ENCODE measurements at regions of chr22 and their contacts with region 1.

Region 1: DNA sequence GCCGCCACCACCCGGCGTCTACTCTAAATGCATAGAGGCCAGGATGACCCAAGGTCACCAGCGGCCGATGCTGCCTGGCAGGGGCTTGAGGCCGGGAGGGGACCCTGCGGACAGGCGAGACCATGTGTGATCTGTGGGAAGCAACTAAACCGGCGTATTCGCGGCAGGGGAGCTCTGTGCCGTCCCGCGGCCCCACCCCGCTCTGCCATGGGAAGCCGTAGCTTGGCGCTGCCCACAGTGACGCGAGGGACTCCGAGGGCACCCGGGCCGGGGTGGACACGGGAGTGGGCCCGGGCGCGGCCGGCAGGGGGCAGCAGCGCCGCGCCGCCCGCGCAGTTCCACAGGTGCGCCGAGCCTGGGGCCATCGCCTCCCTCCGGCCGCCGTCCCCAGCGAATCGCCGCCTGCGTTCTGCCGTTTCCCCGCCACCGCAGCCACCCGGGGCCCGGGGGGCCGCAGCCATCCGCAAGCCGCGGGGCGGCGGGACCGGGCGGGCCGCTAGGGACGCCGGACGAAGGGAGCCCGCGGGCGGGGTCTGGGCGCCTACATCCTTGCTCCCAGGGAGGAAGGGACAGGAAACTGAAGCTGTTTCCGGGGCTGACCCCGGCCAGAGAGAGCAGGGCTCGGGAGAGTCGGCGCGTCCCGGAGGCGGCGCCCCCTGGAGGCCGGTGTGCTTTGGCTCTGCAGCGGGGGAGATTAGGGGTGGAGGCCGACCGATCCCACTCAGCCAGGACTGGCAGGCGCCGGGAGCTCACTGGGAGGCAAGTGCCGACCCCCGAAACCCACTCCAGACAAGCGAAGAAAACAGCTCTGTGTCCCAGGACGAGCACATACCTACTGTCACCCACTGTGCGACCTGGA is 12.5 kb upstream of the HDHD5 start:
- DNase-seq: peak; percentile 52 to 81 (median 72)
- ATAC-seq: peak; percentile 92 to 94
- H3K4me3 Mint-ChIP-seq: peak overlapping the region; percentile 79 to 93 (median 86)
- H3K27ac Mint-ChIP-seq: peak overlapping the region in 9 of 10 donors; percentile 35 to 89 (median 76)
- H3K4me1 Mint-ChIP-seq: peaks cover 2 to 9% (median 7%) of the 10 kb centered on the region in 4 donors
- H3K27me3 Mint-ChIP-seq: no peaks in the 10 kb centered on the region

Region 2: GRCh38 chr22:17074648-17075002 is 96.9 kb before region 1 on chr22:
- POLR2A ChIA-PET with region 1: interaction called, 18 read pairs
- DNase-seq: no peak
- ATAC-seq: no peak
- H3K4me3 Mint-ChIP-seq: no peak overlapping the region
- H3K27ac Mint-ChIP-seq: no peak overlapping the region
- H3K4me1 Mint-ChIP-seq: peaks cover 4 to 17% (median 12%) of the 10 kb centered on the region in 4 donors
- H3K27me3 Mint-ChIP-seq: no peaks in the 10 kb centered on the region

Region 3: DNA sequence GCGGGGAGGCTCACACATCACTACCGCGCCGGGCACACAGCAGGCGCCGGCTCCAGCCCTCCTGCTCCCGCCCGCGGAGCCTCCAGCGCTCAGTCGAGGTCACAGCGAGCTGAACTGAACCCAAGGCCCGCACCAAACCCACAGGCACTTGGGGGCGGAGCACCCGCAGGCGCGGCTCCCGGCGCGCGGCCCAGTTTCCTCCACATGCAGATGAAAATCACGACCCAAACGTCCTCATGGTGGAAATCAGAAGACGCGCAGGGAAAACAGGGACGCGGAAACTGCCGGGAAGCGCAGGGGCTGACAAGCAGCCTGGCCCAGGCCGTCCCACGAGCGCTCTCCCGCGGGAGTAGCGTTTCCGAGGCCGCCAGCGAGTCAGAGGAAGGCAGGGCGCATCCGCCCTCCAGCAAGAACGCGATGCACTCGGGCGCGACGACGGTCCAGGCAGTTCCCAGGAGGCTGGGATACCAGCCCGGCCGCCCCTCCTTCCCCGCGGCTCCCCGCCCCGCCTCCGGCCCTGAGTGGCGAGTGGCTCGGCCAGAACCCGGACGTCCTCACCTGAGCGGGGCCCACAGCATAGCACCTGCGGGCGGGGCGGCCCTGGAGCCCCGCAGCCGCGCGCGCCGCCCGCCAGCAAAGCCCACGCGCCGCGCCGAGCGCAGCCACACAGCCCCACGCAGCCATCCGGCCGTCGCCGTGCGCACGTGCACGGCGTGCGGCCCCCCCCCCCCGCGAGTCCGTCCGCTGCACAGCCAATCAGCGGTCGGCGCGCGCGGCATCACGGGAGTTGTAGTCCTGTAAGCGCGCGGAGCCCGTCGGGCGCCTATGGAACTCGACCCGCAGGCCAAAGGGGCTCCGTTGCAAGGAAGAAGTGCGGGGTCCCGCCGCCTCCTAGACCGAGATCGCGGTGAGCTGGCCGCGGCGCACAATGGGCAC is 12.7 kb before region 1 on chr22 and contains the start of gene HDHD5:
- POLR2A ChIA-PET with region 1: interaction called, 12 read pairs
- DNase-seq: peak; percentile 80 to 94 (median 86)
- ATAC-seq: peak; percentile 90 to 92
- H3K4me3 Mint-ChIP-seq: peak within 1 kb of the TSS; percentile 79 to 90 (median 86)
- H3K27ac Mint-ChIP-seq: peak within 1 kb of the TSS; percentile 38 to 91 (median 78)
- H3K4me1 Mint-ChIP-seq: peaks cover 9 to 42% (median 36%) of the 10 kb centered on the region in 4 donors
- H3K27me3 Mint-ChIP-seq: no peaks in the 10 kb centered on the region
- polyA plus RNA-seq, gene HDHD5: 48.5 to 72.7 (median 59.8) TPM

Region 4: DNA sequence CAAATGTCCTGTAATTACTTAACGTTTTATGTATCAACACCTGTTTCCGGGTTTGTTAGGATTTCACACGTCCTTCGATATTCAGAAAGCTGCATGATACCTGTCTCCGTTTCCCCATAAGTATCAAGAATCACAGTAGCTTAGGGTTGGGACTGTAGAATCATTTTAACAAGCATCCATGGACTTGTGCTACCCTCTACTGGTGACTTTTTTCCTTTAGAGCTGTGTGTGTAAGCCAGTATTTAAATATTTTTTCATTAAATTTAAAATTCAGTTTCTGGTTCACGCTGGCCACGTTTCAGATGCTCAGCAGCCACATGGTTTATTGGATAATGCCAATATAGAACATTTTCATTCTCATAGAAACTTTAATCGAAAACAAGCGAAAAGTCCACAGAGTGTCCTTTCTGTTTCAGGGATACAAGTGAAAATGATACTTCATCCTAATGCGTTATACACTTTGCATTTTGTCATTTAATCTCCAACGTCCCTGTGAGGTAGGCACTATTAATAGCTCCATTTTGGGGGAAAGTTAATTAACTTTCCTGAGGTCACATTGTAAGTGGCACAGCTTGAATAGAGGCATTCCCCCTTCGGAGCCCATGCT is 330.2 kb after region 1 on chr22:
- POLR2A ChIA-PET with region 1: interaction called, 13 read pairs
- DNase-seq: peak in 9 of 10 donors; percentile 1 to 70 (median 43)
- ATAC-seq: peak; percentile 82 to 89
- H3K4me3 Mint-ChIP-seq: no peak overlapping the region
- H3K27ac Mint-ChIP-seq: no peak overlapping the region
- H3K4me1 Mint-ChIP-seq: peaks cover 0 to 5% (median 1%) of the 10 kb centered on the region in 4 donors
- H3K27me3 Mint-ChIP-seq: peaks cover 0 to 4% (median 3%) of the 10 kb centered on the region in 5 donors